ENCODE measurements at regions of chr10 and their contacts with region 1.

Region 1: DNA sequence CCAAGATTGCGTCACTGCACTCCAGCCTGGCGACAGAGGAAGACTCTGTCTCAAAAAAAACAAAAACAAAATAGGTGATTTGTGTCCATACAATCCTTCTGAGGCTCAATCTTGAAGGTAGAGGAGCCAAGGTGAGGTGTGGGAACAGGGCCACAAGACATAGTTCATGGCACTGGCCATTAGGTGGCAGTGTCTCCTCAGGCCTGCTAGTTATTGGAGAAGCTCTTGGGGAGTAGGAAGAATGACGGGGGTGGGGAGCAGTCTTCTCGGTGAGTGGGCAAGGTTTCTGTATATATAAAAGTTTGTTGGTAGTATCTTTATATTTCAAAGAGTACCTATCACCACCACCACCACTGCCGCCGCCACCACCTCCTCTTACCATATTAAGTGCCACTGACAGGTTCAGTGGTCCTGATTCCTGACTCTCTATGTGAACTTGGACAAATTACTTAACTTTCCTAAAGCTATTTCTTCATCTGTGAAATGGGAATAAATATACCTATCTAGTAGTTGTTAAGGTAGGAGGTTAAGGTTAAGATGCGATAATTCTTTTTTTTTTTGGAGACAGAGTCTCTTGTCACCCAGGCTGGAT is 24.0 kb downstream of the CCSER2 start:
- DNase-seq: peak; percentile 60
- H3K27ac ChIP-seq: no peak overlapping the region
- CTCF ChIP-seq: peak; percentile 72

Region 2: DNA sequence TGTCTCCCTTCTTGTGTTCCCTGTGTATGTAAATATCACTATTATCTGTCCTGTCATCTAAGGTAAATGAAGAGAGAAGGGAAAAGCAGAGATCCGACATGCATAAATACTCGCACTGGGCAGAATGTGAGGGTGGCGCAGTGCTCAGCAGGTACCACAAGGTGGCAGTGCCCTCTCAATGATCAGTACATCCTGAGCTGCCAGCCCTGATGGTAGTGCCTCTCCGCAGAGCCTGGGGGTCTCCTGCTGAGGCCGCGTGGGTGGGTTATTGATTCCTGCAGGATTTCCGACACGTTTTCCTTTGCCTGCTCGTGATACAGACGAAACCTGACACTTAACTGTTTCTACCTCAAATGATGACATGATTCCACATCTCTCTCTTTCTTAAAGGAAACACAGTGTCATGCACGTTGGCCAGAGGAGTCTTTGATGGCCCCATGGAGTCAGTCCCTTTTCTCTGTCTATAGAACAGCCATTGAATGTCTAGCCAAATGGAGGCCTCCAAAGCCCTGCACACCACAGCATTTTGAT is 87.7 kb before region 1 on chr10:
- CTCF ChIA-PET with region 1: interaction called, 6 read pairs
- POLR2A ChIA-PET with region 1: interaction called, 11 read pairs
- DNase-seq: peak; percentile 78
- H3K27ac ChIP-seq: no peak overlapping the region
- CTCF ChIP-seq: peak; percentile 92

Region 3: DNA sequence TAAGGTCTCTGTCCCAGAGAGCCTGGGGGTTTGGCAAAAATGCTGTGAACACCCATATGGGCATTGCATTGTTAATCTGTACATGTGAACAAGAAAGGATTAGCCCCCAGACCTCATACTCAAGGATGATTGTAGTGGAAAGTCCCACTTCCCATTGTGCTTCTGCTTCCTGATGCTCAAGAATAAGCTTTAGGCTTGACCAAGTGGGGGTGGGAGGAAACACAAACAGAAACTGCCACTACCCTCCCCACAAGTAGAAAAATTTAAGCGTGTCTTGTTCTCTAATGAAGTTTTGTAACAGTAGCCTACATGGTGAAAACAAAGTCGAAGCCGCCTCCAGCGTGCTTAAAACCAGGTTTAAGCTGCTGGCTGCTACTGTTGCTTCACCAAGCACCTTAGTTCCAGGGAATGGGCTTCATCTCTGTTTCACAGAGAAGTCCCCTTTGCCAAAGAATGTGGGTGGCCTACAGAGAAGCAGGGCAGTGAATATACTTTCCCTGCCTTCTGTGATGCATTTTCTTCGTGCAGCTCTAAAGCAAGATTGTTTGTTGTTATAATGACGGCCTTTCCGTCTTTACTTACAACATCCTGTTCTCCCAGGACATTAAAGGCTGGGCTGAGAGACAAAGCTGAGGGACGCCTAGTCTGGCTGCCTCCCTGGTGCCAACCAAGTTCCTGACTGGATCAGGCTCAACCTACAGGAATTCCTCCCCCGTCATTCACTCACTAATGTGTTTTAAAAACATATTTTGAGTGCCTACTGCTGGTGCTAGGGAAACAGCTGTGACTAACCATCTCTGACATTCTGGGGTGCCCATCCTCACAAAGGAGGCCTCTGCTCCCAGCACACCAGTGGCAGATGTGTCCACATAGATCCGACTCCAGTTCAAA is 56.0 kb before region 1 on chr10:
- CTCF ChIA-PET with region 1: no interaction called
- POLR2A ChIA-PET with region 1: no interaction called
- DNase-seq: no peak
- H3K27ac ChIP-seq: no peak overlapping the region
- CTCF ChIP-seq: no peak

Region 4: DNA sequence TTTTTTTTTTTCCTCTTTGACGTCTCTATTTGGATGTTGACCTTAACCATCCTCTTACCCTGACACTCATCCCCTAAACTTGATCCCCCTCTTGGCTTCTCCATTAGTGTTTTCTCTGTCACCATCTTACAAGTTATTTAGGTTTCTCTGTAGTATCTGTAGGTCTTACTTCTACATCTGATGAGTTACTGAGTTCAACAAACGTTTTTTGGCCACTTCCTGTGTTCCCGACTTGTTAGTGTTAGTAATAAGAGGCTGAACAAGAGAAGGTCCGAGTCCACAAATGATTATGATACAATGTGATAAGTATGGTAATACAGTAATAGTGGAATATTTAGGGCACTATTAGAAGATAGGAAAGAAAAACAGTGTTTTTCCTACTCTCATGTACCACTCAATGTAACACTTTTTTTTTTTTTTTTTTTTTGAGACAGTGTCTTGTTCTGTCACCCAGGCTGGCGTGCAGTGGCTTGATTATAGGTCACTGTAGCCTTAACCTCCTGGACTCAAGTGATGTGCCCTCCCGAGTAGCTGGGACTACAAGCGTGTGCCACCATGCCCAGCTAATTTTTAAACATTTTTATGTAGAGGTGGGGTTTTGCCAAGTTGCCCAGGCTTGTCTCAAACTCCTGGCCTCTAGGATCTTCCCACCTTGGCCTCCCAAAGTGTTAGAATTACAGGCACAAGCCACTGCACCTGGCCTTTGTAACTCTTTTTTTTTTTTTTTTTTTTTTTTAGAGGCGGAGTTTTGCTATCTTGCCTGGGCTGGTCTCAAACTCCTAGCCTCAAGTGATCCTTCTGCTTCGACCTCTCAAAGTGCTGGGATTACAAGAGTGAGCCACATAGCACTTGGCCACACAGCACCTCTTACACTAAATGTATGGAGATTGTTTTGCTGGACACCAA is 11.5 kb before region 1 on chr10:
- CTCF ChIA-PET with region 1: interaction called, 9 read pairs
- POLR2A ChIA-PET with region 1: interaction called, 15 read pairs
- DNase-seq: no peak
- H3K27ac ChIP-seq: no peak overlapping the region
- CTCF ChIP-seq: no peak